Activated T-helper 1 cell treated with anti-CD3 and anti-CD28 coated beads, Interleukin-12 subunit alpha, Interleukin-12 subunit beta, Interleukin-2, Interleukin-4 antibody, amounts not matched to agents 30 ng/mL and 10 ng/mL and 1 ng/mL, durations not matched to agents 14 hours and 24 hours and 36 hours (primary cell): ENCODE measurements at regions of chr11 and their contacts with region 1.

Region 1: GRCh38 chr11:108008656-108009496 is at the start of gene CUL5:
- DNase-seq: peak; percentile 85
- H3K4me3 Mint-ChIP-seq: peak within 1 kb of the TSS; percentile 97
- H3K27ac Mint-ChIP-seq: peak within 1 kb of the TSS; percentile 93
- H3K4me1 Mint-ChIP-seq: peaks cover 15% of the 10 kb centered on the region
- H3K27me3 Mint-ChIP-seq: no peaks in the 10 kb centered on the region
- total RNA-seq, gene CUL5: 37.0 and 41.3 TPM in 2 replicates

Region 2: GRCh38 chr11:107840129-107840484 is 168.8 kb before region 1 on chr11:
- intact Hi-C with region 1: loop called (anchors 1 kb)
- DNase-seq: no peak
- H3K4me3 Mint-ChIP-seq: peak overlapping the region; percentile 64
- H3K27ac Mint-ChIP-seq: peak overlapping the region; percentile 88
- H3K4me1 Mint-ChIP-seq: peaks cover 46% of the 10 kb centered on the region
- H3K27me3 Mint-ChIP-seq: no peaks in the 10 kb centered on the region

Region 3: DNA sequence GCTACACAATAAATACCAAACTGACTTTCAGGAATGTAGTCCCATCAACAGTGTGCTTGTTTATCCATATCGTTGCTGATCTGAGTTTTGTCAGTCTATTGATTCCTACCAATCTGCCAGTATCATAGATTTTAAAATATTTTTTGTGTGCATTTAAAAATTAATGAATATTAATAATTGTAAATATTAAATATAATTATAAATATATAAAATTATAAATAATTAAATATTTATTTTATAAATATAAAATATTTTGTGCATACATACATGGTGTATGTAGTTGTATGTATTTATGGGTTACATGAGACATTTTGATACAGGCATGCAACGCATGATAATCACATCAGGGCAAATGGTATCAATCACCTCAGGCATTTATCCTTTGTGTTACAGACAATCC is 53.5 kb after region 1 on chr11:
- intact Hi-C with region 1: loop called (anchors 5 kb)
- DNase-seq: no peak
- H3K4me3 Mint-ChIP-seq: no peak overlapping the region
- H3K27ac Mint-ChIP-seq: no peak overlapping the region
- H3K4me1 Mint-ChIP-seq: no peaks in the 10 kb centered on the region
- H3K27me3 Mint-ChIP-seq: no peaks in the 10 kb centered on the region

Region 4: GRCh38 chr11:108222686-108223448 is 214.0 kb after region 1 on chr11 and contains the start of gene ATM:
- intact Hi-C with region 1: loop called (anchors 1 kb)
- DNase-seq: peak; percentile 98
- H3K4me3 Mint-ChIP-seq: no peak within 1 kb of the TSS
- H3K27ac Mint-ChIP-seq: no peak within 1 kb of the TSS
- H3K4me1 Mint-ChIP-seq: peaks cover 35% of the 10 kb centered on the region
- H3K27me3 Mint-ChIP-seq: no peaks in the 10 kb centered on the region
- total RNA-seq, gene ATM: 37.3 and 39.7 TPM in 2 replicates

Region 5: GRCh38 chr11:108593214-108593922 is 584.5 kb after region 1 on chr11 and contains the start of gene EXPH5:
- intact Hi-C with region 1: loop called (anchors 2 kb)
- DNase-seq: peak; percentile 76
- H3K4me3 Mint-ChIP-seq: peak within 1 kb of the TSS; percentile 89
- H3K27ac Mint-ChIP-seq: peak within 1 kb of the TSS; percentile 75
- H3K4me1 Mint-ChIP-seq: peaks cover 23% of the 10 kb centered on the region
- H3K27me3 Mint-ChIP-seq: peaks cover 29% of the 10 kb centered on the region
- total RNA-seq, gene EXPH5: 0.56 and 0.65 TPM in 2 replicates